ENCODE measurements at regions of chrX and their contacts with region 1.

Region 1: GRCh38 chrX:69615779-69616456 is at the start of gene EDA:
- DNase-seq: peak; percentile 84
- H3K4me3 ChIP-seq: peak within 1 kb of the TSS; percentile 70
- H3K27ac ChIP-seq: no peak within 1 kb of the TSS
- H3K4me1 ChIP-seq: peaks cover 12% of the 10 kb centered on the region
- CTCF ChIP-seq: no peak
- total RNA-seq, gene EDA: 1.2 and 1.8 TPM in 2 replicates

Region 2: DNA sequence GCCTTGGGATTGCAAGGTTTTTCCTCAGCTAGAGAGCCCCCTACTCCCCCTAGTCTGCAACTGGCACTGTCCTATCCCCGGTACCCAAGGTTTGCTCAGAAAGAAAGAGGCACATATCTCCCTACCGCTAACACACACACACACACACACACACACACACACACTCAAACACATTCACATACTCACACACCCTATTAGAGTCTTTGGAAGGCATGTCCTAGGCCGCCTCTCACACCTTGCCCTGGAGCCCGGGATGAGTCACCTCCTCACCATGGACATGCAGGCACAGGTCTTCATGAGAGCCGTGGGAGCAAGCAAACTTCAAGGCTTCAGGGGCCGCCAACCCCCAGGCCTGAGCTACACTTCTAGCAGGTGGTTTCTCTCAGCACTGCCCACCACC is 499.8 kb before region 1 on chrX:
- CTCF ChIA-PET with region 1: no interaction called
- POLR2A ChIA-PET with region 1: no interaction called
- intact Hi-C with region 1: no loop called
- DNase-seq: no peak
- H3K4me3 ChIP-seq: no peak overlapping the region
- H3K27ac ChIP-seq: no peak overlapping the region
- H3K4me1 ChIP-seq: no peaks in the 10 kb centered on the region
- CTCF ChIP-seq: no peak

Region 3: DNA sequence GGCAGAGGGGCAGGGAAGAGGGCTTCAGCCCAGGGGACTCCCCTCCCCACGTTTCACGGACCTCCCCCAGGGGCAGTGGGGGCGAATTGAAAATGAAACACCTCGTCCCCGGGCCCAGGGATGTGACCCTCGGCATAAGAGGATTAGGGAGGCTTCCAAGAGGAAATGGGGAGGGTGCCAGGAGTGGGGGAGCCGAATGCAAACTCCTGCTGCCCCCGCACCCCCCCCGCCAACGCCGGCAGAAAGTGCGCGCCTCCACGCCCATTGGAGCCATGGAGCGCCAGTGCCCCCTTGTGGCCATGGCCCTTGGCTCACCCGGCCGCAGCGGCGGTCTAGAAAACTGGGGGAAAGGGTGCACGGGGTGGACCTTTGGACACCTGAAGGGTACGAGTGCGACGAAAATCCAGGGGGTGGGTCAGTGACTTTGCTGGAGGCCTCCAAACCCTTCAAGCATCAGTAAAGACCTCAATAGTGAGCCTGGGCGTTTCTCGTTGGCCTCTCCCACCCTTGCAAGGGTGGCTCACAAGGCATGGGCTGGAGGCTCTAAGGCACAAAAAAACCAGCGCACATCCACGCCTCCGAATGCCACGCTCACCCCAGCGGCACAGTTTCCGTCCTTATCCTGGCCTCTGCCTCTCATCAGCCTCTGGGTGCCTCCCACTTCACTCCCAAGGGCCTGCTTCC is 329.9 kb before region 1 on chrX:
- CTCF ChIA-PET with region 1: no interaction called
- POLR2A ChIA-PET with region 1: no interaction called
- intact Hi-C with region 1: no loop called
- DNase-seq: peak; percentile 49
- H3K4me3 ChIP-seq: peak overlapping the region; percentile 38
- H3K27ac ChIP-seq: no peak overlapping the region
- H3K4me1 ChIP-seq: no peaks in the 10 kb centered on the region
- CTCF ChIP-seq: peak; percentile 71

Region 4: GRCh38 chrX:69424161-69424560 is 191.8 kb before region 1 on chrX:
- CTCF ChIA-PET with region 1: no interaction called
- POLR2A ChIA-PET with region 1: no interaction called
- intact Hi-C with region 1: no loop called
- DNase-seq: peak; percentile 5
- H3K4me3 ChIP-seq: no peak overlapping the region
- H3K27ac ChIP-seq: no peak overlapping the region
- H3K4me1 ChIP-seq: no peaks in the 10 kb centered on the region
- CTCF ChIP-seq: peak; percentile 66

Region 5: DNA sequence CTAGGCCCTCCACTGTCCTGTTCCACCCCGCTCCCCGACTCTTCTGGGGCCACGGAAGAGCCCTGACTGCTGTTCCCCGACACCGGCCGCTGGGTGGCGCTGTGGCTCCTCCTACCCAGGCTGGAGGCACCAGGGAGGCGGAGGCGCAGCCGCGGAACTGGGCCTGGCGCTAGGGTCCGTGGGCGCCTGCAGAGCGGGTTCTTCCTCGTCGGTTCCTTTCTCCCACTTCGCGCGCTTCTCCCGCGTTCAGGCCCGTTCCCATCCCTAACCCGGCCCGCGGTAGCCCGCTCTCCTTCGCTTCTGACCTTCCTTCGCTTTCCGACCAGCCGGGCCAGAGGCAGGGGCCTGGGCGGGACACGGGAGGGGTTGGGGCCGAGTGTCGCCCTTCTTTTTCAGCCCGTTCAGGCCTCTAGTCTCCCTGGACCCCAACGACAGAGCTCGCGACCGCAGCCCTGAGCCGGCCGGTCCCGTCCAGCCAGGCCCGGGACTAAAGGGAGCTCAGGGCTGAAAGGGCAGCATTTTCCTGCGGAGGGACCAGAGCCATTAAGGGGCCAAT is 77.5 kb before region 1 on chrX:
- CTCF ChIA-PET with region 1: interaction called, 3 read pairs
- POLR2A ChIA-PET with region 1: interaction called, 3 read pairs
- intact Hi-C with region 1: loop called (anchors 1 kb)
- DNase-seq: peak; percentile 26
- H3K4me3 ChIP-seq: no peak overlapping the region
- H3K27ac ChIP-seq: no peak overlapping the region
- H3K4me1 ChIP-seq: peaks cover 26% of the 10 kb centered on the region
- CTCF ChIP-seq: peak; percentile 69

Region 6: DNA sequence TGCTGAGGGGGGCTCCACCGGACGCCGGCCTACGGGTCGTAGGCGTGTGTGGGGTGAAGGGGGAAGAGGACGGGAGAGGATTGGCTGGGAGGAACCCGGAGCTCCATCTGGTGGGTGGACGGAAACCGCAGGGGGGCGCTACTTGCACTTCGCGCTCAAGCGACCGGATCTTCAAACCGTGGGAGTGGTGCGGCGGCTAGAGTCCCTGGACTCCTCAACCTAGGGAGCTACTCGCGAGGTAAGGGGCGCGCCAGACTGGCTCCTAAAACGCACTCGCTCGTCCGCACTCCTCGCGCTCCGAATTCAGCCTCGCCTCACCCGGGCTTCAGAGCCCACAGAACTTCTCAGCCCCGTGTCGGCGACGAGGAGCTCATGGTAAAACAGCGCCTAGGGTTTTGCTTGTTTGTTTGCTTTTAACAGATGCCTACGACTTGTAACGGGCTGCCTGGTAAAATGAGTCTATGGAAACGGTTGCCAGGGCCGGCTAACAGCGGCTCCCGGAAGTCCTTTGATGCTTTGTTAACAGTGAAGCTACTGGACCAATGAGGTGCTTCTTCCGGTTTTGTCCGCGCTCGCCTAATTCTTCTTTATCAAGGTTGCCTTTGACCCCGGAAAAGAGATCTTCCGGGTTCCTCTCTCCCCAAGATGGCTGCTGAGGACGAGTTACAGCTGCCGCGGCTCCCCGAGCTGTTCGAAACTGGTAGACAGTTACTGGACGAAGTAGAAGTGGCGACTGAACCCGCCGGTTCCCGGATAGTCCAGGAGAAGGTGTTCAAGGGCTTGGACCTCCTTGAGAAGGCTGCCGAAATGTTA is 517.6 kb after region 1 on chrX and contains the start of gene IGBP1:
- CTCF ChIA-PET with region 1: no interaction called
- POLR2A ChIA-PET with region 1: interaction called, 4 read pairs
- intact Hi-C with region 1: loop called (anchors 5 kb)
- DNase-seq: peak; percentile 90
- H3K4me3 ChIP-seq: peak within 1 kb of the TSS; percentile 82
- H3K27ac ChIP-seq: peak within 1 kb of the TSS; percentile 98
- H3K4me1 ChIP-seq: peaks cover 24% of the 10 kb centered on the region
- CTCF ChIP-seq: peak; percentile 77
- total RNA-seq, gene IGBP1: 47.2 and 60.0 TPM in 2 replicates

Measured in OCI-LY7 (cell line).